Activated T-helper 1 cell treated with anti-CD3 and anti-CD28 coated beads, Interleukin-12 subunit alpha, Interleukin-12 subunit beta, Interleukin-2, Interleukin-4 antibody, amounts not matched to agents 30 ng/mL and 10 ng/mL and 1 ng/mL, durations not matched to agents 14 hours and 24 hours and 36 hours (primary cell): ENCODE measurements at regions of chr16 and their contacts with region 1.

Region 1: DNA sequence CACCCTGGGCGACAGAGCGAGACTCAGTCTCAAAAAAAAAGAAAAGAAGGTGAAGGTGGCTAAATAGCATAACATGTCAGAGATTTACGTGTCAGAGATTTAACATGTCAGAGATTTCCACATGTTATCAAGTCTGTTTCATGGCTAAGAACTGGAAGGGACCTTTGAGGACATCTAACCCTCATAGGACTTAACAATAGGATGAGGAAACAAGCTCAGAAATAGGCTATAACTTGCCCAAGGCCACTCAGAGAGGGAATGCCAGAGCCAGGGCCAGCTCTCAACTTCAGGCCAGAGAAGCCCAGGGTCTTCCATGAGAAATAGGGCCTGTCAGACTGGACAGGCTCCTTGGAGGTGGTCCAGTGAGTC is 26.8 kb upstream of the ZNF629 start:
- DNase-seq: no peak
- H3K4me3 Mint-ChIP-seq: peak overlapping the region; percentile 92
- H3K27ac Mint-ChIP-seq: peak overlapping the region; percentile 78
- H3K4me1 Mint-ChIP-seq: peaks cover 15% of the 10 kb centered on the region
- H3K27me3 Mint-ChIP-seq: peaks cover 4% of the 10 kb centered on the region

Region 2: DNA sequence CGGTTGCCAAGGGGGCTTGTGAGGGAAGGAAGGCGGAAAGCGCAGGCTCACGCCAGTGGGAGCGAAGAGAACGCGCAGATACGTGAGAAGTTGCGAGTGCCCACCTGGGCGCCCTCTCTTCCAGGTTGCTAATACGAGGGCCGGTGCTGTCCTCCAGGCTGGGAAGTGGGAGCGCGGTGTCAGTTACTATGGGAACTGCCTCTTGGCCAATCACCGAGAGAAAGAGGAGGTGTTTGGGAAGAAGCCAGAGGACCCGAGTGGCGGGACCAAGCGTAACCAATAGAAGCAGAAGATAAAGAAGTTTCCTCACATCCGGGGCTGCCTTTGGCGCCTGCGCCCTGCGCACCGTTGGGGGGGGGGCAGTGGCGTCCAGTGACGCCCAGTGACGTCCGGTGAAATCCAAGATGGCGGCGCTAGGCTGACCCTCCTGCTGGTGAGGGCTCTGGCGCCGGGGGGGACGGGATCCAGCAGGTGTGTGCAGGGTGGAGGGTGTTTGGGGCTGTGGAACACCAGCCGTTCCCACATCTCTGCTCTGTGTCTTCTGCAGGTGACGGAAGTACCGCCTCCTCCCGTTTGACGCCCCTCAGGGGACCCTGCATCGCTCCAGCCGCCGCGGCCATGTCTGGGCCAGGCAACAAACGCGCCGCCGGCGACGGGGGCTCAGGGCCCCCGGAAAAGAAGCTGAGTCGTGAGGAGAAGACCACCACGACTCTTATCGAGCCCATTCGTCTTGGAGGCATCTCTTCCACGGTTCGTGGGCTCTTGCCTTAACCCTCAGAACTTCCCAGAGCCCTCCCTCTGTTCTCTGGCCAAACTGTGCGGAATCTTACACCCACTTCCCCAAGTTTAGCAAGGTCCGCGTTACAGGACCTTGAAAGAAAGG is 51.6 kb before region 1 on chr16 and contains the starts of genes CFAP119 and RNF40:
- intact Hi-C with region 1: loop called (anchors 1 kb)
- DNase-seq: peak; percentile 95
- H3K4me3 Mint-ChIP-seq: peak within 1 kb of the TSS; percentile 93
- H3K27ac Mint-ChIP-seq: peak within 1 kb of the TSS; percentile 82
- H3K4me1 Mint-ChIP-seq: peaks cover 28% of the 10 kb centered on the region
- H3K27me3 Mint-ChIP-seq: no peaks in the 10 kb centered on the region
- total RNA-seq, gene CFAP119: 4.4 and 5.6 TPM in 2 replicates
- total RNA-seq, gene RNF40: 98.2 and 98.5 TPM in 2 replicates

Region 3: DNA sequence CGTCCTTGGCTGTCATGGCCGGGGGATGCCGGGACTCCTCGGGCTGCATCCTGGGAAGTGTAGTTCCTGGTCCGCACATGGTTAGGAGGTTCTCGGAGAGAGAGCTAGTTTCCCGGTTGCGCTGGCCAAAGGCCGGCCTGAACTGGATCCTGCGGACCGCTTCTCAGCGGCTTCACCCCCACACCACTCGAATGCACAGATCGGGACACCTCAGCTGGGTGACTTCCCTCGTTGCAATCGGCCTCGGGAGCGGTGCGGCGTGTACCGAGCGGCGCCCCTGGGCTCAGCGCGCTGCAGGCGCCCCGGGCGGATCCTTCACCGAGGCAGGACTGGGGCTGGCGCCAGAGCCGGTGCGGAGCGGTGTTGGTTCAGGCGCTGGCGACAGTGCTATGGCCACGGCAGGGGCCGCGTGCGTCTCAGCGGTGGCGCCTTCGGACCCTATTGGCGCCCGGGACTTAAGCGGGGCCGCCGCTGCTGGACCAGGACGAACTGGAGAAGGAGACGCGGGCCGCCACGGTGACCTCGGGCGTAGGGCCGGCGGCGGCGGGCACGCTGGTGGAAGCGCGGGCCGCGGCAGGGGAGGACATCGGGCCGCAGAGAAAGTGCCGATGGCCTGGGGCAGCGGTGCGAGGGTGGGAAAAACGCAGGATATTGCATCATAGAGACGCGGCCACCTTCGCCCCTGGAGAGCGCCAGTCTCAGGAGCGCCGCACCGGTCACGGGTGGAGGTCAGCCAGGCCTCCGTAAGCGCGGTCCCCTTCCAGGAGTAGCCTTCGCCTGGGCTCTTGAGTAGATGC is 38.2 kb before region 1 on chr16:
- intact Hi-C with region 1: loop called (anchors 1 kb)
- DNase-seq: peak; percentile 56
- H3K4me3 Mint-ChIP-seq: peak overlapping the region; percentile 94
- H3K27ac Mint-ChIP-seq: peak overlapping the region; percentile 96
- H3K4me1 Mint-ChIP-seq: peaks cover 20% of the 10 kb centered on the region
- H3K27me3 Mint-ChIP-seq: no peaks in the 10 kb centered on the region

Region 4: DNA sequence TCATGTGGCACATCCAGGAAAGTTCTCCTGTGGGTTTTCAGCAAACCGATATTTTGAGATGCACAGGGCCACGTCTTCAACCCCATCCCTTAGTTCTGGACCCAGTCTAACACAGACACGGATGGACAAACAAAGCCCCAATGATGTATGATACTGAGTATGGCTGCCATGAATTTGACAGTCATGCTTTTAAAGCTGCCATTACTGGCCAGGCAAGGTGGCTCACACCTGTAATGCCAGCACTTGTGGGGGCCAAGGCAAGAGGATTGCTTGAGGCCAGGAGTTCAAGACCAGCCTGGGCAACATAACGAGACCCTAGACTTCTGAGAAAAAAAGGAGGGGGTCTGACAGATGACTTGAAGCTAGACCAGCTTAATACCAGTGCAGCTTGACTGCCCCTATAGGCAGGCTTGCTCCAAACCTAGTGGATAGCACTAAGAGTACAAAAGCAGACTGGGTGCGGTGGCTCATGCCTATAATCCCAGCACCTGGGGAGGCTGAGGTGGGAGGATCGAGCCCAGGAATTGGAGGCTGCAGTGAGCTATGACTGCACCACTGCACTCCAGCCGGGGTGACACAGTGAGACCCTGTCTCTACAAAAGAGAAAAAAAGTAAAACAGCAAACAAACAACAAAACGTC is 16.0 kb before region 1 on chr16:
- intact Hi-C with region 1: loop called (anchors 2 kb)
- DNase-seq: no peak
- H3K4me3 Mint-ChIP-seq: no peak overlapping the region
- H3K27ac Mint-ChIP-seq: no peak overlapping the region
- H3K4me1 Mint-ChIP-seq: peaks cover 2% of the 10 kb centered on the region
- H3K27me3 Mint-ChIP-seq: peaks cover 6% of the 10 kb centered on the region

Region 5: DNA sequence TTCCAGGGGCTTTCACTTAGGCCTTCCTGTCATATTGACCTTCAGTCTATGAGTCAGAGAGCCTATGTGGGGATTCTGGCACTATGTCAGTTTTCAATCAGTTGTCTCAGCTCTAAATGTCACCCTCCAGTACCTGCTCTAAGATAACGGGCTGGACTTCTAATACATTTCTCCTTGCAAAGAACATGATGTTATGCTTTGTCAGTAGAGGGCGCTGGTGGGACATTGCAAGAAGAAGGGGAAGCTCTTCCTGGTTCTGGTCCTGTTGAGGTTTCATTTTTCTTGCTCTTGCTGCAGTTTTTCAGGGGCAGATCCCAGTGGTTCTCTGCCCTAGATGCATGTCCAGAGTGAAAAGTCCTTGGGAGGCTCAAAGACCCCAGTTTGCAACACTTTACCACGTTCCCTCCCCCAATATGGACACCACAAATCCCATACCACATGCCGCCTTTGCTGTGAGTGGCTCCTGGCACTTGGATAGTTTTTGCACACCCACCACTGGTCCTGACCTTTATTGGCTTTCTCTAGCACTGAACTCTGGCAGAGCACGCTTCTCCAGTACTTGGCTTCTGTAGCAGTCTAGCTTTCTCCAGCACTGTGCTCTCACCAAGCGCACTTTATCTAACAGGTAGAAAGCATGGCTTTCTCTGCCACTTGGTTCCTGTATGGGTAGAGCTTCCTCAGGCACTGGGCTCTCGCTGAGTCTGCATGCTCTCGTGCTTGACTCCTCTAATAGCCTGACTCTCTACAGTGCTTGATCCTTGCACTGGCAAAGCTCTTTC is 31.1 kb after region 1 on chr16:
- intact Hi-C with region 1: loop called (anchors 1 kb)
- DNase-seq: peak; percentile 77
- H3K4me3 Mint-ChIP-seq: no peak overlapping the region
- H3K27ac Mint-ChIP-seq: peak overlapping the region; percentile 13
- H3K4me1 Mint-ChIP-seq: peaks cover 12% of the 10 kb centered on the region
- H3K27me3 Mint-ChIP-seq: peaks cover 1% of the 10 kb centered on the region

Region 6: GRCh38 chr16:30874821-30875717 is 61.3 kb after region 1 on chr16:
- intact Hi-C with region 1: loop called (anchors 2 kb)
- DNase-seq: peak; percentile 86
- H3K4me3 Mint-ChIP-seq: peak overlapping the region; percentile 97
- H3K27ac Mint-ChIP-seq: peak overlapping the region; percentile 94
- H3K4me1 Mint-ChIP-seq: peaks cover 23% of the 10 kb centered on the region
- H3K27me3 Mint-ChIP-seq: no peaks in the 10 kb centered on the region

Region 7: DNA sequence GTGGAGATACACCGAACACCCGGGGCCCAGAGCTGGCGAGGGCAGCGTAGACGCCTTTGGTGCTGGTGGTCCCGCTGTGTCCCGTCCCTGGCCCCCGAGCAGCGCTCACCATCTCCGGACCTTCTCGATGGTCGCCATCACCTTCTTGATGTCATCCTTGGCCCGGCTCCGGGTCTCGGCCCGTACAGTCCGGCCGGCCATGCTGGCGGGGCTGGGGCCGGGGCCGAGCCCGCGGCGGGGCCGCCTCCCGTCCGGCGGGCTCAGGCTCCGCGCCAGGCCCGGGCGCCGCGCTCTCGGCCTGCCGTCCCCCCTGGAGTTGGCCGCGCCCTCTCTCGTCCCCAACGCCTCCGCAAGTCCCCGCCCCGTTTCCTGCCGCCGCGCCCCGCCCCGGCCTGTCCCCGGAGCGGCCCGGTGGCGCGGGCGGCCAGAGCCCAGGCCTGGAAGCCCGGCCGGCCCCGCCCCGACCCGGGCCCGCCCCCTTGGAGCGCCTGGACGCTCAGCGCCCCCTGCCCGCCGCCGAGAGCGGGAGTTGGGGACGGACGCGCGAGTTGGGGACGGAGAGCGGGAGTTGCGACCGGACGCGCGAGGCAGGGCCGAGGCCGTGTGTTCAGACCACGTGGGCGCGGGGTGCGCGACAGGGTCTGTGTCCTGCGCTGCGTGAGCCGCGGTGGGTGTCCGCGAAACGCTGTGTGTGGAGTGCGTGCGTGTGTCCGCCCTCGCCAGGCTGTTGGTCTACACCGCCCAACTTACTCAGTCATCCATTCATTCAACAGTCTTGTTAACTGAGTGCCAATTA is 80.1 kb after region 1 on chr16 and contains the start of gene BCL7C:
- intact Hi-C with region 1: loop called (anchors 1 kb)
- DNase-seq: peak; percentile 86
- H3K4me3 Mint-ChIP-seq: peak within 1 kb of the TSS; percentile 92
- H3K27ac Mint-ChIP-seq: peak within 1 kb of the TSS; percentile 78
- H3K4me1 Mint-ChIP-seq: peaks cover 39% of the 10 kb centered on the region
- H3K27me3 Mint-ChIP-seq: no peaks in the 10 kb centered on the region
- total RNA-seq, gene BCL7C: 23.1 and 25.3 TPM in 2 replicates